K562 (cell line): ENCODE measurements at regions of chr4 and their contacts with region 1.

Region 1: DNA sequence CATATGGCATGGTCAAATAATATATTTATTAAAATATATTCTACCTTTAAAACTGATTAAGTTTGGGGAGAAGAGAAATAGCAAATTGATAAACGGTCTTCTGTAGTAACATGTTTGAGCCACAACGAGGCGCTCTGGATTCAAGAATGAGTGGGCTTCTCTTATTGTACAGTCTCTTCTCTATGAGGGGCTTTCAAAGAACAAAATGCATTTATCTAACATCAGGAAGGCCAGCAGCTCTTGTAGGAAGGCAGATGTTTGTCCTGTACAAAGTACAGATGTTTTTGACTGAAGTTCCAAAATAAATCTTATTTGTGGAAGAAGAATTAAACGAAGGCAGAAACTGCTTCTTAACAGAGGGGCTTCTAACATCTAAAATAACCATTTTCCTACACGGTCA is 153.6 kb downstream of the RASL11B start:
- DNase-seq: peak in 2 of 4 experiments; percentile 25 to 55
- ATAC-seq: peak; percentile 57; the same call in 1 of the 3 replicates
- H3K4me3 ChIP-seq: no peak overlapping the region
- H3K27ac ChIP-seq: no peak overlapping the region
- H3K4me1 ChIP-seq: peaks cover 0 to 12% of the 10 kb centered on the region in 2 experiments; a peak in 2 of 5 replicates
- H3K27me3 ChIP-seq: no peaks in the 10 kb centered on the region
- CTCF ChIP-seq: peak; percentile 48 to 83 (median 68); a peak in 5 of 6 replicates
- EP300 ChIP-seq: no peak
- POLR2A ChIP-seq: no peak
- RAD21 ChIP-seq: peak; percentile 79 to 88

Region 2: GRCh38 chr4:52638717-52639116 is 377.0 kb before region 1 on chr4:
- CTCF ChIA-PET with region 1: no interaction called
- POLR2A ChIA-PET with region 1: no interaction called
- in situ Hi-C with region 1: no loop called
- intact Hi-C with region 1: no loop called
- DNase-seq: no peak
- ATAC-seq: no peak
- H3K4me3 ChIP-seq: no peak overlapping the region
- H3K27ac ChIP-seq: no peak overlapping the region
- H3K4me1 ChIP-seq: no peaks in the 10 kb centered on the region
- H3K27me3 ChIP-seq: no peaks in the 10 kb centered on the region
- CTCF ChIP-seq: no peak
- EP300 ChIP-seq: no peak
- POLR2A ChIP-seq: no peak
- RAD21 ChIP-seq: no peak

Region 3: DNA sequence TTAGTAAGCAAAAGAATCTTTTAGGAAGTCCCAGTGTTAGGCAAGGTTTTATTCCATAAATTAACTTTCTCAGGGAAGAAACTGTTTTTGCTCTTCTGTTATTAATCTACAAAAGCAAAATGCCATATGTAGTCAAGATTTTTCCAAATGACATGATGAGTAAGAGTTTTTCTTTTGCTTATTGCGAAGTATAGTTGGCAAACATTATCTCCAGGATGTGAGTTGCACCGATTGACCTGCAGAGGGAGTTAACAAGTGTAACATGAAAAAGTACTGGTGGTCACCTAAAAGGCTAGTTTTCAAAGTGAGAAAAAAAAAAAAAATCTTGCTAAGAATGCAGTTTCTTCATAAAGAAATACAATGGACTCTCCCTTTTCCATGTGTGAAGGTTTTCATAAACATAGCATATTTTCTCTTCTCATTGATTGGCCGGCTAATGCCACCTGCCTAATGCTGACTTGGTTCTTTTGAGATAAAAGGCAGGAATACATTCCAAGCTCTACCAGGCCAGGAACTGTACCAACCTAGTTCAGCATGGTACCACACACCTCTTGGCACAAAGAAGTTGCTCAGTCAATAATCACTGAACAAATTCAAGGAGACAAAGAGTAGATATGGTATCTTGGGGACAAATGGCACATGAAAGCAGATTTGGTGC is 475.4 kb after region 1 on chr4:
- CTCF ChIA-PET with region 1: no interaction called
- POLR2A ChIA-PET with region 1: no interaction called
- in situ Hi-C with region 1: no loop called
- intact Hi-C with region 1: loop called (anchors 10 kb)
- DNase-seq: peak; percentile 40 to 52 (median 44)
- ATAC-seq: peak; percentile 85
- H3K4me3 ChIP-seq: no peak overlapping the region
- H3K27ac ChIP-seq: no peak overlapping the region
- H3K4me1 ChIP-seq: peaks cover 0 to 4% of the 10 kb centered on the region in 2 experiments; a peak in 2 of 5 replicates
- H3K27me3 ChIP-seq: no peaks in the 10 kb centered on the region
- CTCF ChIP-seq: peak; percentile 46 to 60 (median 59); a peak in 4 of 6 replicates
- EP300 ChIP-seq: no peak
- POLR2A ChIP-seq: no peak
- RAD21 ChIP-seq: peak; percentile 37 to 52; a peak in 3 of 4 replicates

Region 4: GRCh38 chr4:53653484-53654053 is 637.9 kb after region 1 on chr4:
- CTCF ChIA-PET with region 1: no interaction called
- POLR2A ChIA-PET with region 1: no interaction called
- in situ Hi-C with region 1: no loop called
- intact Hi-C with region 1: loop called (anchors 10 kb)
- DNase-seq: no peak
- ATAC-seq: no peak
- H3K4me3 ChIP-seq: no peak overlapping the region
- H3K27ac ChIP-seq: no peak overlapping the region
- H3K4me1 ChIP-seq: no peaks in the 10 kb centered on the region; a peak in 1 of 5 replicates
- H3K27me3 ChIP-seq: peaks cover 4 to 20% of the 10 kb centered on the region in 2 experiments; a peak in 2 of 5 replicates
- CTCF ChIP-seq: peak in 1 of 3 experiments; percentile 8; a peak in 1 of 6 replicates
- EP300 ChIP-seq: no peak
- POLR2A ChIP-seq: no peak
- RAD21 ChIP-seq: no peak

Region 5: DNA sequence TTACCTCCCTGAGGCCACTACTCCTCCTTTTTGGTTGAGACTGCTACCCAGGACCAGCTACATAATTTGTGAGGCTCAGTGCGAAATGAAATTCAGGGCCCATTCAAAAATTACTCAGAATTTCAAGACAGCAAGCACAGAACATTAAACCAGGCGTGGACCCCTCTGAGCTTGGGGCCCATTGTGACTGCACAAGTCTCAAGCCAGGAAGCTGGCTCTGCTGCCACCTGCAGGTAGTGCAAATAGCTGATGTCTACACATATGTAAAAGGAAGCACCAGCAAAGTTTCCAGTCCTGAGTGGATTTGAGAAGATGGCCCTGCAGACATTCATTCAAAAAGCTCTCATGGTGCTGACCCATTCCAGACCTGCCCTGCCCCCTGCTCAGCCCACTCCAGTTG is 789.0 kb after region 1 on chr4:
- CTCF ChIA-PET with region 1: no interaction called
- POLR2A ChIA-PET with region 1: no interaction called
- in situ Hi-C with region 1: loop called (anchors 25 kb)
- intact Hi-C with region 1: loop called (anchors 5 kb)
- DNase-seq: peak; percentile 32 to 57 (median 34)
- ATAC-seq: peak; percentile 89
- H3K4me3 ChIP-seq: no peak overlapping the region
- H3K27ac ChIP-seq: no peak overlapping the region
- H3K4me1 ChIP-seq: no peaks in the 10 kb centered on the region
- H3K27me3 ChIP-seq: peaks cover 0 to 1% of the 10 kb centered on the region in 2 experiments; a peak in 1 of 5 replicates
- CTCF ChIP-seq: peak; percentile 58 to 71 (median 68)
- EP300 ChIP-seq: no peak
- POLR2A ChIP-seq: no peak
- RAD21 ChIP-seq: peak; percentile 67 to 71

Region 6: DNA sequence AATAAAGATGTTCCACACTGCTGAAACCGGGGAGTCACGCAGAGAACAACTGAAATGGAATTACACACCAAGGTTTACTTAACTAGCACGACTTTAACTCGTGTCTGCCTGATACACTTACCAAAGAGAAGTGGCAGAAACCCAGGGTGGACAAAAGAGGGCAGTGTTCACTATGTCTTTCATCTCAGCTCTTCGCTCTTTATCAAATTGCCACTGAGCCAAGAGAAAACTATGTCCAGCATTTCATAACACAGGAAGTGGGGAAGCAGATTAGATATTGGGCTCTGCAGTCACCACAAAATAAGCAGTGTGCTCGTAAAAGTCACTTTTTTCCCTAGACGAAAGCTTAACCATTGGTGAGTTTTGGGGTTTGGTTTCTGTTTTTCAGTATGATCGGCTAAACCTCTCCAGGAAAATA is 893.0 kb after region 1 on chr4:
- CTCF ChIA-PET with region 1: no interaction called
- POLR2A ChIA-PET with region 1: no interaction called
- in situ Hi-C with region 1: no loop called
- intact Hi-C with region 1: loop called (anchors 10 kb)
- DNase-seq: peak; percentile 16 to 67 (median 38)
- ATAC-seq: peak; percentile 94
- H3K4me3 ChIP-seq: no peak overlapping the region
- H3K27ac ChIP-seq: no peak overlapping the region
- H3K4me1 ChIP-seq: peaks cover 0 to 5% of the 10 kb centered on the region in 2 experiments; a peak in 1 of 5 replicates
- H3K27me3 ChIP-seq: peaks cover 2 to 10% of the 10 kb centered on the region in 2 experiments; a peak in 4 of 5 replicates
- CTCF ChIP-seq: peak; percentile 71 to 86 (median 81)
- EP300 ChIP-seq: peak; percentile 37; the same call in 1 of the 2 replicates
- POLR2A ChIP-seq: no peak
- RAD21 ChIP-seq: peak; percentile 86

Region 7: GRCh38 chr4:54233277-54233696 is 1217.6 kb after region 1 on chr4:
- CTCF ChIA-PET with region 1: interaction called, 7 read pairs
- POLR2A ChIA-PET with region 1: no interaction called
- in situ Hi-C with region 1: loop called (anchors 5 kb)
- intact Hi-C with region 1: loop called (anchors 2 kb)
- DNase-seq: peak; percentile 68 to 83 (median 74)
- ATAC-seq: peak; percentile 98
- H3K4me3 ChIP-seq: no peak overlapping the region
- H3K27ac ChIP-seq: no peak overlapping the region
- H3K4me1 ChIP-seq: peaks cover 0 to 12% of the 10 kb centered on the region in 2 experiments; a peak in 2 of 5 replicates
- H3K27me3 ChIP-seq: peaks cover 3 to 26% of the 10 kb centered on the region in 2 experiments; a peak in 3 of 5 replicates
- CTCF ChIP-seq: peak; percentile 72 to 78 (median 75)
- EP300 ChIP-seq: no peak
- POLR2A ChIP-seq: no peak
- RAD21 ChIP-seq: peak; percentile 62 to 70